HCT116 (cell line): ENCODE measurements at regions of chr22 and their contacts with region 1.

Region 1: DNA sequence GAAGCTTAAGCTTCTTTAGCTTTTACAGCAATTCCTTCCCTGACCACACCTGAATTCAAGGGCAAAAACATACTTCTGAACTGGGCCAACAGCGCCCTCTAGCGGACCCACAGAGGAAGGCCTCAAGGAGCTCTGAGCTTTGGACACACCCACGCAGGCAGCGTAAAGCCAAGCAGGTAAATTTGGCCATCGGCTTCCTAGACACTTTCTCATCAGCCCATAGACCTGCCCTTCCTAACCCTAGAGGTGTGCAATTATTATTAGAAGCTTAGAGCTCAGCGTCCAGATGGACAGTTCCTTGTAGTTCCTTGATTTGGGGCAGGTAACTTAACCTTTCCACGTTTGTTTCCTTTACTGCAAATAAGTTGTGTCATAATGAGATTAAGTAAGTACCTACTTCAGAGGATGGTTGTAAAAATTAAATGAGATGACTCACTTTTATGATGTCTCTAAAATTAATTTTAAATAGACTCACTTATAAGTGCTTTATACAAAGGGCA is 25.7 kb upstream of the HMGXB4 start:
- DNase-seq: peak; percentile 85
- ATAC-seq: peak; percentile 93
- H3K4me3 ChIP-seq: peak overlapping the region; percentile 49 to 64
- H3K27ac ChIP-seq: peak overlapping the region; percentile 28
- H3K4me1 ChIP-seq: peaks cover 0 to 20% of the 10 kb centered on the region in 2 experiments; a peak in 2 of 4 replicates
- H3K27me3 ChIP-seq: no peaks in the 10 kb centered on the region
- CTCF ChIP-seq: peak; percentile 64 to 99 (median 98)
- POLR2A ChIP-seq: no peak
- RAD21 ChIP-seq: peak; percentile 74

Region 2: DNA sequence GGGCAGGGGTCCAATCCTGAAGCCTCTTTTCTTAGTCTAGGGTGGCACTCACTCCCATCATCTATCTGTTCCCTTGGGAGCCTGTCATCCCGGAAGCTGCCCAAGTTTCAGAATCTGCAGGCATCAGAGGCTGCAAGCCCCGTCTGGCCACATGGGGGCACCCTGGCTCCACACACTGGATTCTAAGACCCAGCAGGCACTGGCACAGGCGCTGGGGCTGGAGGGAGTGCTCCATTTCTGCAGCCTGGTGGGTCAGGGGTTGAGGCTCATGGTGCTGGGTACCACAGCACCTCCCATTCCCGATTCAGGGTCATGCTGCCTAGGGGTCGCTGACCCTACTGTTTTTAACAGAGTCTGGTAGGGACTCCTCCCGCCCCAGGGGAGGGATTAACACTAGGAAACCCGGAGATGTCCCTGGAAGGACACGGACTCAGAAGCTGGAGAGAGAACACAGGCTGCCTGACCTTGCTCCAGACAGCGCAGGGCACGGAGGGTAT is 1929.5 kb before region 1 on chr22:
- CTCF ChIA-PET with region 1: no interaction called
- POLR2A ChIA-PET with region 1: no interaction called
- RAD21 ChIA-PET with region 1: no interaction called
- intact Hi-C with region 1: loop called (anchors 5 kb)
- DNase-seq: peak; percentile 0
- ATAC-seq: peak; percentile 63
- H3K4me3 ChIP-seq: no peak overlapping the region
- H3K27ac ChIP-seq: no peak overlapping the region
- H3K4me1 ChIP-seq: no peaks in the 10 kb centered on the region
- H3K27me3 ChIP-seq: no peaks in the 10 kb centered on the region
- CTCF ChIP-seq: peak in 2 of 3 experiments; percentile 59; a peak in 4 of 6 replicates
- POLR2A ChIP-seq: no peak
- RAD21 ChIP-seq: peak; percentile 19; the same call in 1 of the 2 replicates

Region 3: GRCh38 chr22:34934261-34934660 is 297.4 kb before region 1 on chr22:
- CTCF ChIA-PET with region 1: no interaction called
- POLR2A ChIA-PET with region 1: no interaction called
- RAD21 ChIA-PET with region 1: no interaction called
- intact Hi-C with region 1: no loop called
- DNase-seq: no peak
- ATAC-seq: no peak
- H3K4me3 ChIP-seq: no peak overlapping the region
- H3K27ac ChIP-seq: no peak overlapping the region
- H3K4me1 ChIP-seq: no peaks in the 10 kb centered on the region
- H3K27me3 ChIP-seq: peaks cover 11% of the 10 kb centered on the region; the same call in 1 of the 2 replicates
- CTCF ChIP-seq: no peak
- POLR2A ChIP-seq: no peak
- RAD21 ChIP-seq: no peak

Region 4: GRCh38 chr22:35140879-35141745 is 90.5 kb before region 1 on chr22:
- CTCF ChIA-PET with region 1: interaction called, 12 read pairs
- POLR2A ChIA-PET with region 1: no interaction called
- RAD21 ChIA-PET with region 1: no interaction called
- intact Hi-C with region 1: no loop called
- DNase-seq: no peak
- ATAC-seq: peak; percentile 74
- H3K4me3 ChIP-seq: no peak overlapping the region; a peak in 1 of 4 replicates
- H3K27ac ChIP-seq: peak overlapping the region; percentile 22; the same call in 1 of the 2 replicates
- H3K4me1 ChIP-seq: peaks cover 15 to 20% of the 10 kb centered on the region in 2 experiments
- H3K27me3 ChIP-seq: no peaks in the 10 kb centered on the region
- CTCF ChIP-seq: peak; percentile 6 to 66 (median 53); a peak in 4 of 6 replicates
- POLR2A ChIP-seq: no peak
- RAD21 ChIP-seq: peak; percentile 41

Region 5: DNA sequence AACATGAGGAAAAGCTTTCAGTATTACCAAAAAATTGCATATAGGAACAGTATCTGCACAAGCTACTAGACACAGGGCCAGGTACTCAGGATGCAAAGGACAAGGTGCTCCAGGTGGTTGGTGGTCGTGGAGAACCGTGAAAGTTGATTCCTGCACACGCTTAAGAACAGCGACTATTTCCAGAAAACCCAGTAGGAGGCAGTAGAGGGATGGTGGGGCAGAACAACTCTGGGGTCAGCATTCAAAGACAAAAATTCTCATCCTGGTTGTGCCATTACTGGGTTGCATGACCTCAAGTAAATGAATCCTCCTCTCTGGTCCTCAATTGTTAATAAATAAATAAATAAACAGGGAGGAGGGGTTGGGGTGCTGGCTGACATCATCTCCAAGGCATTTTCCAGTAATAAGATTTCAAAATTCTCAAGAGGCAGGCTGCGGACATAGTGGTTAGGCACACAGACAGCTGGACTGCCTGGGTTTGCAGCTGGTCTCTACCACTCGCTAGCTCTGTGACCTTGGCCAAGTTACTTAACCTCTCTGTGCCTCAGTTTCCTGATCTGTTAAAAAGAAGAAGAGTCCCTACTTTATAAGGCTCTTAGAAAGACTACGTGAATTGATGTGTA is 76.1 kb before region 1 on chr22:
- CTCF ChIA-PET with region 1: interaction called, 33 read pairs
- POLR2A ChIA-PET with region 1: interaction called, 5 read pairs
- RAD21 ChIA-PET with region 1: interaction called in 1 of 2 experiments, 5 read pairs
- intact Hi-C with region 1: loop called (anchors 2 kb)
- DNase-seq: no peak
- ATAC-seq: no peak
- H3K4me3 ChIP-seq: no peak overlapping the region
- H3K27ac ChIP-seq: no peak overlapping the region
- H3K4me1 ChIP-seq: peaks cover 3 to 17% of the 10 kb centered on the region in 2 experiments; a peak in 3 of 4 replicates
- H3K27me3 ChIP-seq: no peaks in the 10 kb centered on the region
- CTCF ChIP-seq: peak in 2 of 3 experiments; percentile 11 to 29; a peak in 3 of 6 replicates
- POLR2A ChIP-seq: no peak
- RAD21 ChIP-seq: no peak

Region 6: GRCh38 chr22:35257321-35258190 is 25.9 kb after region 1 on chr22 and contains the start of gene HMGXB4:
- CTCF ChIA-PET with region 1: interaction called, 22 read pairs
- POLR2A ChIA-PET with region 1: interaction called, 4 read pairs
- RAD21 ChIA-PET with region 1: no interaction called
- intact Hi-C with region 1: no loop called
- DNase-seq: peak; percentile 71
- ATAC-seq: peak; percentile 91
- H3K4me3 ChIP-seq: peak within 1 kb of the TSS; percentile 69 to 87
- H3K27ac ChIP-seq: peak within 1 kb of the TSS; percentile 84
- H3K4me1 ChIP-seq: peaks cover 9 to 16% of the 10 kb centered on the region in 2 experiments; a peak in 3 of 4 replicates
- H3K27me3 ChIP-seq: no peaks in the 10 kb centered on the region
- CTCF ChIP-seq: no peak
- POLR2A ChIP-seq: peak; percentile 50
- RAD21 ChIP-seq: no peak
- total RNA-seq, gene HMGXB4: 36.7 TPM